OCI-LY7 (cell line): ENCODE measurements at regions of chr12 and their contacts with region 1.

Region 1: GRCh38 chr12:6697584-6698351 is 2.8 kb downstream of the PIANP start:
- DNase-seq: peak; percentile 64
- H3K4me3 ChIP-seq: peak overlapping the region; percentile 69
- H3K27ac ChIP-seq: peak overlapping the region; percentile 96
- H3K4me1 ChIP-seq: peaks cover 74% of the 10 kb centered on the region
- CTCF ChIP-seq: peak; percentile 82

Region 2: GRCh38 chr12:6493497-6494257 is 204.1 kb before region 1 on chr12 and contains the start of gene NCAPD2:
- CTCF ChIA-PET with region 1: no interaction called
- POLR2A ChIA-PET with region 1: no interaction called
- intact Hi-C with region 1: loop called (anchors 5 kb)
- DNase-seq: peak; percentile 98
- H3K4me3 ChIP-seq: peak within 1 kb of the TSS; percentile 91
- H3K27ac ChIP-seq: peak within 1 kb of the TSS; percentile 96
- H3K4me1 ChIP-seq: peaks cover 37% of the 10 kb centered on the region
- CTCF ChIP-seq: peak; percentile 40; the same call in 1 of the 2 replicates
- total RNA-seq, gene NCAPD2: 157 and 195 TPM in 2 replicates

Region 3: GRCh38 chr12:6613776-6614512 is 83.8 kb before region 1 on chr12:
- CTCF ChIA-PET with region 1: interaction called, 3 read pairs
- POLR2A ChIA-PET with region 1: interaction called, 5 read pairs
- intact Hi-C with region 1: loop called (anchors 1 kb)
- DNase-seq: peak; percentile 42
- H3K4me3 ChIP-seq: no peak overlapping the region
- H3K27ac ChIP-seq: peak overlapping the region; percentile 18
- H3K4me1 ChIP-seq: peaks cover 36% of the 10 kb centered on the region
- CTCF ChIP-seq: peak; percentile 48; the same call in 1 of the 2 replicates

Region 4: GRCh38 chr12:6662906-6663742 is 34.6 kb before region 1 on chr12 and contains the start of gene ING4:
- CTCF ChIA-PET with region 1: no interaction called
- POLR2A ChIA-PET with region 1: no interaction called
- intact Hi-C with region 1: loop called (anchors 1 kb)
- DNase-seq: peak; percentile 100
- H3K4me3 ChIP-seq: peak within 1 kb of the TSS; percentile 79
- H3K27ac ChIP-seq: peak within 1 kb of the TSS; percentile 67
- H3K4me1 ChIP-seq: peaks cover 19% of the 10 kb centered on the region
- CTCF ChIP-seq: no peak
- total RNA-seq, gene ING4: 27.1 and 38.1 TPM in 2 replicates

Region 5: DNA sequence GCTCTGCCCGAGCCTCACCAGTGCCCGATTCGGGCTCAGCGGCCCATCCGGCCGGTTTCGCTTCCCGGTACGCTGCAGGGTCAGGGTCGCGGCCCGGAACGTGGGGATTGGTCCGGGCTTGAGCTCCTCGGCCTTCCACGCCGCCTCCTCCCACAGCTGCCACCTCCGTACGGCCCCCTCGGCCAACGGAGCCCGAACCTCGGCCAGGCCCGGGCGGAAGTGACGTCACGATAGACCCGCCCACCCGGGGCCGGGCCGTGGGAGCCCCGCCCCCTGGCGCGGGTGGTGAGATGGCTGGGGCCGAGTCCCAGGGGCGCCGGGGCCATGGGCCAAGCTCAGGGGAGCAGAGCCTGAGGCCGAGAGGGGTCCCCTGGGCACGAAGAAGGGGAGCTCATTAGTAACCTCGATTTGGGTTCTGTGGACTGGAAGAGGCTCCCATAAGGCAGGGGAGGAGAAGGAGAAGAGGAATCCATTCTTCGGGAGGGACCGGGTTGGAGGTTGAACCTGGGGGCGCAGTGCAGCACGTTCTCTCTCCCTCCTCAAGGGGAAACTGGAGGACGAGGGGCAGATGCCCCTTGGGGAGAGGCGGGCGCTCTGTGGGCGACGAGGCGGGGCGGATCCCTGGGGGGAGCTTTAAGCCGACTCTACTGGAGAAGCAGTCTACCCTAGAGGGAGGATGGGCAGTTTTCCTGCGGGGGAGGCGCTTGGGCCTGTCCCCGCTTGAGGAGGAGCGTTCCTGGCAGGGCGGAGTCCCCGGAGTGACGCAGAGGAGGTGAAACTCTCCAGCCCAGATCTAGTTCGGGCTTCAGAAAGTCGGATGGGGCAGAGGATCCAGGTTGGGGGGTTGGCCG is 55.4 kb after region 1 on chr12 and contains the start of gene MLF2:
- CTCF ChIA-PET with region 1: interaction called, 3 read pairs
- POLR2A ChIA-PET with region 1: interaction called, 7 read pairs
- intact Hi-C with region 1: loop called (anchors 2 kb)
- DNase-seq: peak; percentile 97
- H3K4me3 ChIP-seq: peak within 1 kb of the TSS; percentile 89
- H3K27ac ChIP-seq: peak within 1 kb of the TSS; percentile 73
- H3K4me1 ChIP-seq: peaks cover 17% of the 10 kb centered on the region
- CTCF ChIP-seq: no peak
- total RNA-seq, gene MLF2: 87.3 and 96.2 TPM in 2 replicates